OCI-LY7 (cell line): ENCODE measurements at regions of chr11 and their contacts with region 1.

Region 1: DNA sequence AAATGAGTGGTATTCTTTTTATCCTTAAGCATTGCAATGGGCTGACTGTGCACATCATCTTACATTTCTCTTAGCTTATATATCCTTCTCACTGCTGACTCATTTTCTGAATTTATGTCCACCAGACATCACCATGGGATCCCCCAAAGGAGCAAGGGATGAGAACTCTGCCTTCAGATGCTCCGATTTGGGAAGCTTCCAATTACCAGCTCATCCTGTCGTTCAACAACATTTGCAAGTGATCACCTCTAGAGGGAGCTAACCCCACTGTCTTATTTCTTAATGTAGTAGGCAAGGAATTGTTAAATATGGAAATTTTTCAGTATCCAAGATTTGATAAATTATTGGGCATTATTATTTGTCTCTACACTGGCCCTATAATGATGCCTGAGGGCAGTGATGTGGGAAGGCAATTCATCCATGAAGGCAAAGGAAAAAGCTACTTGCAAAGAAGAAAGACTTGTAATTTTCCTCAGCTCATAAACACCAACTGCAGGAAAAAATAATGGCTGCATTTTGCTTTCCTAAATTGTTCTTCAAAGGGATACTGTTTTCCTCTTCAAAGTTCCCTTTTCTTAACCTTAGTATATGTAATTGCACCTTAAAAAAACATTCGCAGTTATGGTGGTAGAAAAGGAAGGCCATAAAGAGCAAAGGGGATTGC is 102.4 kb upstream of the FSHB start:
- DNase-seq: peak; percentile 37
- H3K4me3 ChIP-seq: no peak overlapping the region
- H3K27ac ChIP-seq: no peak overlapping the region
- H3K4me1 ChIP-seq: no peaks in the 10 kb centered on the region
- CTCF ChIP-seq: peak; percentile 86

Region 2: GRCh38 chr11:30314625-30315024 is 186.2 kb after region 1 on chr11:
- CTCF ChIA-PET with region 1: interaction called, 3 read pairs
- POLR2A ChIA-PET with region 1: no interaction called
- intact Hi-C with region 1: loop called (anchors 10 kb)
- DNase-seq: no peak
- H3K4me3 ChIP-seq: no peak overlapping the region
- H3K27ac ChIP-seq: no peak overlapping the region
- H3K4me1 ChIP-seq: no peaks in the 10 kb centered on the region
- CTCF ChIP-seq: peak; percentile 76

Region 3: GRCh38 chr11:30917859-30918478 is 789.6 kb after region 1 on chr11:
- CTCF ChIA-PET with region 1: no interaction called
- POLR2A ChIA-PET with region 1: no interaction called
- intact Hi-C with region 1: loop called (anchors 10 kb)
- DNase-seq: peak; percentile 62
- H3K4me3 ChIP-seq: no peak overlapping the region
- H3K27ac ChIP-seq: no peak overlapping the region
- H3K4me1 ChIP-seq: no peaks in the 10 kb centered on the region
- CTCF ChIP-seq: peak; percentile 89